ENCODE measurements at regions of chr19 and their contacts with region 1.

Region 1: DNA sequence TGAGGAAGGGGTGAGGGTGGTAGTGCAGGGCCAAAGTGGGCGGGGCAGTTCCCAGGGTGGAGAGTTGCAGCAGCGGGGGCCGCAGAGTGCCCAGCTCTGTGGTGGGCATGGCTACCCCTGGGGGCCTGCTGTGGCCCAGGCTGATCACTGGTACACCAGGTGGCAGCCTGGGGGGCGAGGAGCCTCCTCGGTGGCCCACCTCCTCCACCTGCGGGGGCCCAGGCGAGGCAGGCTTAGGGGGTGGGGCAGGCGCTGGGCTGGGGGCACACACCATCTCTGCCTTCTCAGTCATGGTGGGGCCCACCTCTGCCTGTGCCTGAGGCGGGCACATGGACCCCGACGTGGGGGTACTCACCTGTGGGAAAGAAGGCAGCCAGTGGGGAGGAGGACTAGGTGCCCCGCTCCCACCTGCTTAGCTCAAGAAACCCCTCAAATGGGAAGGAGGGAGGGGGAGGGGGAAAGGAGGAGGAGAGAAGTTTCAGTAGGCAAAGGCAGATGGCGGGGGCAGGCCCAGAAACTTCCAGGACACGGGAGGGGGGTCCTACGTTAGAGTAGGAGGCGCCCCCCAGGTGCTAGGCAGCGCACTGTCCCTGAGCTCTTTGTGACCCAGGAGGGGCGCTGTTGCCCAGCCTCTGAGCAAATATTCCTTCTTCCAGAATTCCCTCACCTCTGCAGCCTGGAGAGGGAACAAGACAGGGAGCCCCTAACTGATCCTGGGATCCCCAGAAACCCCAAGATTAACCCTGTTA is 1.6 kb downstream of the LYL1 start:
- DNase-seq: no peak
- H3K4me3 ChIP-seq: no peak overlapping the region
- H3K27ac ChIP-seq: no peak overlapping the region
- H3K4me1 ChIP-seq: peaks cover 2% of the 10 kb centered on the region; the same call in 1 of the 2 replicates
- H3K27me3 ChIP-seq: no peaks in the 10 kb centered on the region
- CTCF ChIP-seq: peak; percentile 57

Region 2: GRCh38 chr19:12992729-12993128 is 108.3 kb before region 1 on chr19:
- CTCF ChIA-PET with region 1: interaction called, 17 read pairs
- POLR2A ChIA-PET with region 1: no interaction called
- intact Hi-C with region 1: no loop called
- DNase-seq: no peak
- H3K4me3 ChIP-seq: no peak overlapping the region
- H3K27ac ChIP-seq: no peak overlapping the region
- H3K4me1 ChIP-seq: peaks cover 5% of the 10 kb centered on the region; the same call in 1 of the 2 replicates
- H3K27me3 ChIP-seq: peaks cover 27% of the 10 kb centered on the region
- CTCF ChIP-seq: no peak

Region 3: DNA sequence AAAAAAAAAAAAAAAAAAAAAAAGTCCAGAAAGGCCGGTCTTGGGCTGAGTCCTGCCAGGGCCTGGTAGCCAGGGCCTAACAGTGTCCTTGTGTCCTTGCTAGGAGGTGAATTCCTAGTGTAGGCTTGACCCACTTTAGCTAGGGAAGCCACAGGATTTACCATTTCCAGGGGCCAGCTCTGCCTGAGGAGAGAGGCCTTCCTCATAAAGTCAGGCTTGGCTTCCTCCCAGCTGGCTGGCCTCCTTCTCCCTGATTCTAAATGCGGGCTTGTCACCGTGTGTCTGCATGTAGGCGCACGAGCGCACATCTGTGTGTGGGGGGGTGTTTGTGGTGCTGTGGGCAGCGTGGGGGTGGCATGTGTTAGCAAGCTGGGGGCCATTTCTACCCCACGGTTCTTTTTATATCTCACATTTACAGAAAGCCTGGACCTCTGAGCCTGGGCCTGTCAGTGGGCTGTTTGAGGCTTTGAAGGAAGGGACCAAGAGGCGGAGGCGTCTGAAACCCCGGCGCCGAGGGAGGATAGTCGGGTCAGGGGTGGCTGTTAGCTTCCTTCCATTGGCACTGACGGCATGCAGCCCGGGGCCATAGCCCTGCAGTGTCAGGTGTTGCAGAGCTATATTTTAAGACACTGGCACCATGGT is 80.9 kb after region 1 on chr19:
- CTCF ChIA-PET with region 1: no interaction called
- POLR2A ChIA-PET with region 1: no interaction called
- intact Hi-C with region 1: no loop called
- DNase-seq: no peak
- H3K4me3 ChIP-seq: no peak overlapping the region
- H3K27ac ChIP-seq: no peak overlapping the region
- H3K4me1 ChIP-seq: no peaks in the 10 kb centered on the region
- H3K27me3 ChIP-seq: no peaks in the 10 kb centered on the region
- CTCF ChIP-seq: no peak

Region 4: GRCh38 chr19:13417054-13417453 is 316.0 kb after region 1 on chr19:
- CTCF ChIA-PET with region 1: no interaction called
- POLR2A ChIA-PET with region 1: no interaction called
- intact Hi-C with region 1: no loop called
- DNase-seq: no peak
- H3K4me3 ChIP-seq: no peak overlapping the region
- H3K27ac ChIP-seq: no peak overlapping the region
- H3K4me1 ChIP-seq: no peaks in the 10 kb centered on the region
- H3K27me3 ChIP-seq: peaks cover 63% of the 10 kb centered on the region
- CTCF ChIP-seq: no peak

Measured in PC-9 (cell line).